Mammary epithelial cell (primary cell): ENCODE measurements at regions of chr20 and their contacts with region 1.

Region 1: DNA sequence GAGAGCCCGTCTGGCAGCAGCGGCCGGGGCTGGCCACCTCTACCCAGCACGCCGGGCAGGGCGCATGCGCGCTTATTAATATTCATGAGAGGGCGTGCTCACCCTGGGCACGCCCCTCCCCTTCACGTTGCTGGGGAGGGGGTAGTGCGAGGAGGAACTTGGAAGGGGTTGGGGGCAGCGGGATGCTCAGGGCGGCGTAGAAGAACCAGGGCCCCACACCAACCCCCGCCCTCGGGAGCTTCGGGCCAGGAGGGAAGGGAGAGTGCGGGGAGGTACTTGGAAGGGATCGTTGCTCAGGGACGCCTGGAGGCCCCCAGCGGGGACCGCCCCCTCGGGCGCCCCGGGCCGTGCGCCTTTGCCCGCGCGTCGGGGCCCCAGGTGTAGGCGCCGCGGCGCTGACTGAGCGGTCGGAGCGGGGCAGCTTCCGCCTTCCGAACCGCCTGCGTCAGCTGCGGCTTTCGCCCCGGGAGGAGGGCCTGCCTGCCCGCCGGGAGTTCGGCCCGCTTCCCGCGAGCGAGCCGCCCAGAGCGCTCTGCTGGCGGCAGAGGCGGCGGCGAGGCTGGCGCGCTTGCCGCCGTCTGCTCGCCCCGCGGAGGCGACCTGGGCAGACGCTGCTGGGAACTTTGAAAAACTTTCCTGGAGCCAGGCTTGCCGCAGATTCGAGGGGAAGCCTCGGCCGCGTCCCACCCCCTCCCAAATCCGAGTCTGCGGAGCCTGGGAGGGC is at the start of gene JAG1:
- DNase-seq: peak; percentile 95
- H3K4me3 ChIP-seq: peak within 1 kb of the TSS; percentile 85 to 97 (median 87)
- H3K27ac ChIP-seq: peak within 1 kb of the TSS; percentile 93
- H3K4me1 ChIP-seq: peaks cover 27% of the 10 kb centered on the region
- H3K27me3 ChIP-seq: no peaks in the 10 kb centered on the region
- CTCF ChIP-seq: no peak
- total RNA-seq, gene JAG1: 244 to 283 TPM

Region 2: DNA sequence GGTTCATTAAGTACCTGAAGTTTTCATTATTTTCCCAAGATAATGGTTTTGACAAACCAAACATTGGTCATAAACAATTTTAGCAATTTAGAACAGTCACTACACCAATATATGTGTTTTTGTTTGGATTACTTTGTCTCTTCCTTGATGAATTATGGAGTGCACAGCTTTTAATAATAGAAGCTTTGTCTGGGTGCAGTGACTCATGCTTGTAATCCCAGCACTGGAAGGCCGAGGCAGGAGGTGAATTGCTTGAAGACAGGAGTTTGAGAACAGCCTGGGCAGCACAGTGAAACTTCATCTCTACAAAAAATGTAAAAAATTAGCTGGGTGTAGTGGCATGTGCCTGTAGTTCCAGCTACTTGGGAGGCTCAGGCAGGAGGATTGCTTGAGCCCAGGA is 728.7 kb before region 1 on chr20:
- CTCF ChIA-PET with region 1: no interaction called
- dilution Hi-C with region 1: no loop called
- in situ Hi-C with region 1: no loop called
- intact Hi-C with region 1: no loop called
- DNase-seq: peak; percentile 79
- H3K4me3 ChIP-seq: no peak overlapping the region
- H3K27ac ChIP-seq: peak overlapping the region; percentile 35
- H3K4me1 ChIP-seq: peaks cover 13% of the 10 kb centered on the region
- H3K27me3 ChIP-seq: no peaks in the 10 kb centered on the region
- CTCF ChIP-seq: no peak

Region 3: DNA sequence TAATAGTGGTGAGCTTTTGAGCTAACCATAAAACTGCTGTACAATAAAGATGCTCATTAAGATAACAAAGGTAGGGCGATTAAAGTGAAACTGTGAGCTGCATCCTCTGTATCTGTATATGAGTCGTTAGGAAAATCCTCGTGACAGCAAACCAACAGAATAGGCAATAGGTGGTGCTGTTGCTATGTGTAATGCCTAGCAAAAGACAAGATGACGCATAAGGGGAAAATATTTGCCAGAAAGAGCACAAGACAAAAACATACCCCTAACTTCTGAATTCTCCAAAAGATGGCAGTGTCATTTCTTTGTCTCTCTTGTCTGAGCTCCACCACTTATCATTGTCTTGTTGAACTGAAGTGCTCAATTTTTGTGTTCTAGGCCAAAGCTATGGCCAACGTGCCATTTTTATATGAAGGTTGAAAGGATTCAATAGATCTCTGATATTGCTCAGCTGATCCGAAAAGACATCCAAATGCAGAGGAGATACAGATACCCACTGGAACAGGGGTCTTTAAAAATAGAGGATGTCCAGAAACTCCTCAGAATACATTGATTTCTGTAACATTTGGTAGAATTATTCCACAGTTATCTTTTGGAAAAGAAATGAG is 695.6 kb before region 1 on chr20:
- CTCF ChIA-PET with region 1: no interaction called
- dilution Hi-C with region 1: no loop called
- in situ Hi-C with region 1: no loop called
- intact Hi-C with region 1: loop called (anchors 2 kb)
- DNase-seq: peak; percentile 86
- H3K4me3 ChIP-seq: peak overlapping the region in 2 of 3 experiments; percentile 25 to 38
- H3K27ac ChIP-seq: peak overlapping the region; percentile 42
- H3K4me1 ChIP-seq: peaks cover 7% of the 10 kb centered on the region
- H3K27me3 ChIP-seq: no peaks in the 10 kb centered on the region
- CTCF ChIP-seq: peak; percentile 80 to 81

Region 4: DNA sequence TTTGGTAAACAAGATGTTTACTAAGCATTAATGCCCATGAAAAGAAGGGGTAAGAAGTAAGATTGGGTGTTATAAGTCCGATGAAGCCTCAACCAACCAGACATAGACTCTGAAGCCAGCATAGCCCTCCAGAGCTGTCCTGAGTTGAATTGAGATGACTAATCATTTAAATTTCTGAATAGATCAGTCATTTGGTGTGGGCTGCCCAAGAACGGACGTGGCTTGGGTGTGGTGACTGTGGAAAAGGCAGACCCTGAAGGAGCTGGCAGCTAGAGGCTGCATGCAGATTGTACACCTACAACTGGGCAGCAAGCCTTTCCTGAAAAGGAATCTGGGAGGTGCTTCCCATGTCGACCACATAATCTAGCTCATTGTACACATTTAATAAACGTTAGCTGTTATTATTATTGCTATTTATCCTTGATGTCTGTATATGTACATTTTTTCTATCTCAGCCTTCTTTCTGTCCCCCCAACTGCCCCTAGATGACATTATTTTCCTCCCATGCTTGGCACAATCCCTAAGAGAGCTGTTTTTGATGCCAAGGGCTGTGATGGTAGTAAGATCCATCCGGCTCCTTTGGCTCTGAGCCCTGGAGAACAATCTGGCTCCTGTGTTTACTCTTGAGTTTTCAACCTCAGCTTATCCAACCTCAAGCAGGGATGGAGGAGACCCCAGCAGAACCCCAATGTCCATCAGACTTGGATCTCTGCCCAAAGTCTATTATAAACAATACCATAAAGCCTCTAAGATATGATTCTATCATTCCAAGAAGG is 57.2 kb after region 1 on chr20:
- CTCF ChIA-PET with region 1: interaction called, 3 read pairs
- dilution Hi-C with region 1: no loop called
- in situ Hi-C with region 1: no loop called
- intact Hi-C with region 1: loop called (anchors 1 kb)
- DNase-seq: peak; percentile 64
- H3K4me3 ChIP-seq: no peak overlapping the region
- H3K27ac ChIP-seq: peak overlapping the region; percentile 64
- H3K4me1 ChIP-seq: peaks cover 47% of the 10 kb centered on the region
- H3K27me3 ChIP-seq: no peaks in the 10 kb centered on the region
- CTCF ChIP-seq: no peak

Region 5: GRCh38 chr20:10922941-10923340 is 248.8 kb after region 1 on chr20:
- CTCF ChIA-PET with region 1: no interaction called
- dilution Hi-C with region 1: no loop called
- in situ Hi-C with region 1: no loop called
- intact Hi-C with region 1: loop called (anchors 1 kb)
- DNase-seq: peak; percentile 80
- H3K4me3 ChIP-seq: no peak overlapping the region
- H3K27ac ChIP-seq: peak overlapping the region; percentile 64
- H3K4me1 ChIP-seq: peaks cover 56% of the 10 kb centered on the region
- H3K27me3 ChIP-seq: no peaks in the 10 kb centered on the region
- CTCF ChIP-seq: no peak

Region 6: DNA sequence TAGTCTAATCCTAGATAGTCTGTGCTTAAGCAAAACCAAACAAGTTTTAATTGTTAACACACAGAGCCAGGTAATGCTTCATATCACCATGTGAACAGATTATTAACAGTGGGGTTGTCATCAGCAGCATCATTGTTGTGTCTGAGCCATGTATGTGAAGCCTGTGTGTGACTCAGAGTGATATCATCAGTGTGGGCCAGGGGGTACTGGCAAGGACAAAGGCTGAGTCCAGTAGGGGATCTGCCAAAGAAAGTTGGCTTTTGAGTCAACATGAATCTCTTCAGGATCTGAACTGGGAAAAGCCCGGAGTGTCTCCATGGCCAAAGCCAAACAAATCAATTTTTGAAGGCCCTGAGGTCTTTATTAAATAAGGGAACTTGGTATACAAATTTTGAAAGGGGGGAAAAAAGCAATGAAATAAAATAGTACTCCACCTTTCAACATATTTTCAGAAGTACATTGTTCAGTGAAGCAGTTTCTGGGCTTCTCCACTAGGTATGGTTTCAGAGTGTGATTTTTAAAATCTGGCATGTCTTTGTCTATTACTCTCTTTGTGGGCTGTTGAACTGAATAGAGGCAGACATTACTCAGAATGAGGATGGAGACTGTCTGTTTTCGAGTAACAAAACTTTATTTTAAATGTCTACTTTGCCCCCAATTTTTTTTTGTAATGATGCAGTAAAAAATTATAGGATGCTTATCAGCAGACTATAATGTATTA is 443.8 kb after region 1 on chr20:
- CTCF ChIA-PET with region 1: no interaction called
- dilution Hi-C with region 1: no loop called
- in situ Hi-C with region 1: no loop called
- intact Hi-C with region 1: loop called (anchors 5 kb)
- DNase-seq: peak; percentile 99
- H3K4me3 ChIP-seq: no peak overlapping the region
- H3K27ac ChIP-seq: peak overlapping the region; percentile 99
- H3K4me1 ChIP-seq: peaks cover 33% of the 10 kb centered on the region
- H3K27me3 ChIP-seq: no peaks in the 10 kb centered on the region
- CTCF ChIP-seq: peak in 1 of 2 donors; percentile 0

Region 7: GRCh38 chr20:11274141-11274594 is 600.0 kb after region 1 on chr20:
- CTCF ChIA-PET with region 1: interaction called, 3 read pairs
- dilution Hi-C with region 1: no loop called
- in situ Hi-C with region 1: loop called in 1 of 2 experiments (anchors 5 kb)
- intact Hi-C with region 1: loop called (anchors 1 kb)
- DNase-seq: peak; percentile 81
- H3K4me3 ChIP-seq: no peak overlapping the region
- H3K27ac ChIP-seq: no peak overlapping the region
- H3K4me1 ChIP-seq: no peaks in the 10 kb centered on the region
- H3K27me3 ChIP-seq: no peaks in the 10 kb centered on the region
- CTCF ChIP-seq: peak; percentile 48 to 61